ENCODE measurements at regions of chr4 and their contacts with region 1.

Region 1: DNA sequence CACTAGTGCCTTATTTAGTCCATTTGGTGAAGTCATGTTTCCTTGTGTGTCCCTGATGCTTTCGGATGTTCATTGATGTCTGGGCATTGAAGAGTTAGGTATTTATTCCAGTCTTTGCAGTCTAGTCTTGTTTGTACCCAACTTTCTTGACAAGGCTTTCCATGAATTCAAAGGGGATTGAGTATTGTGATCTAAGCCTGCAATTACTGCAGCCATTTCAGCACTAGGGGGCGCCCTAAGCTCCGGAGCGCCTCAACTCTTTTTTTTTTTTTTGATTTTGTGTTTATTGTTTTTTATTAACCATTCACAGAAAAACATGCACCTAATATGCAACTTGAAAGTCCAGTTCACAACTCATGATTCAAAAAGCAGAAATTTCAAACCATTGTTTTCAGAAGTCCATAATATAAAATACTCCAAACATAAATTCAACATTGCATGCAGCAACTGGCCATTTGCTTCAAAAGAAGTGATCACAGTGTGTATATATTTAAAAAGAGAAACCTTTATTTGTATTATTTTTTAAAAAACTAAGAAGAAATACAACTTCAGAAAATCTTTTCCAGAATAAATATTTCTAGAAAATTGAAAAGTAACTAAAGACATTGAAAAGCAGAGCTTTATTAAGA is 59.2 kb downstream of the PTPN13 start:
- DNase-seq: no peak
- H3K4me3 ChIP-seq: no peak overlapping the region
- H3K27ac ChIP-seq: no peak overlapping the region
- H3K4me1 ChIP-seq: no peaks in the 10 kb centered on the region
- H3K27me3 ChIP-seq: no peaks in the 10 kb centered on the region
- CTCF ChIP-seq: no peak
- POLR2A ChIP-seq: no peak

Region 2: DNA sequence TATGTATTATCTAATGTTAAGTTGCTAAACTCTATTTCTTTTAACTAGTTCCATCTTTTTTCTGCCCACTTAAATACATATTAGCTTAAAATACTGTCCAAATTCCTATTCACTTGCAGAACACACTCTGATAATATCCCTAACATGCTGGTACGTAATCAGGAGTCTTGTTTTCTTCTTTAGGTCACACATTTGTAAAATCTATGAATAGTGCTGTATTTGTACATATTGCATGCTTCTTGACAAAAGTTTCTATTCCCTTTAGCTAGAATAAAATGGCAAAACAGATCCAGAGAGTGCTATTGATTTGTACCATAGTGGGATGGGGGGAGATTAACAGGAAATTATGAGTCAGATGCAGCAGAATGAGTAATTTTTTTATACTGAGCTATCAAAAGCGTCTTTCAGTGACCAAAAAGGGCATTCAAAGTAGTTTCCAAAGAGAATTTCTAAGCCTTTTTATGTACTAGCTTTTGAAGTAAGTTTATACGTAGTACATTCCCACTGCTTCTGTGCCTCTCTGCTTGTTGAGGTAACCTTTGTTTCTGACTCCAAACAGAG is 67.2 kb after region 1 on chr4:
- intact Hi-C with region 1: loop called (anchors 2 kb)
- DNase-seq: no peak
- H3K4me3 ChIP-seq: no peak overlapping the region
- H3K27ac ChIP-seq: no peak overlapping the region
- H3K4me1 ChIP-seq: no peaks in the 10 kb centered on the region
- H3K27me3 ChIP-seq: no peaks in the 10 kb centered on the region
- CTCF ChIP-seq: no peak
- POLR2A ChIP-seq: no peak

Measured in breast epithelium (tissue), 4 donors.